ENCODE measurements at regions of chr1 and their contacts with region 1.

Region 1: GRCh38 chr1:233209481-233209880 is 86.0 kb downstream of the PCNX2 start:
- DNase-seq: no peak
- ATAC-seq: no peak
- H3K4me3 Mint-ChIP-seq: no peak overlapping the region
- H3K27ac Mint-ChIP-seq: no peak overlapping the region
- H3K4me1 Mint-ChIP-seq: no peaks in the 10 kb centered on the region
- H3K27me3 Mint-ChIP-seq: no peaks in the 10 kb centered on the region

Region 2: DNA sequence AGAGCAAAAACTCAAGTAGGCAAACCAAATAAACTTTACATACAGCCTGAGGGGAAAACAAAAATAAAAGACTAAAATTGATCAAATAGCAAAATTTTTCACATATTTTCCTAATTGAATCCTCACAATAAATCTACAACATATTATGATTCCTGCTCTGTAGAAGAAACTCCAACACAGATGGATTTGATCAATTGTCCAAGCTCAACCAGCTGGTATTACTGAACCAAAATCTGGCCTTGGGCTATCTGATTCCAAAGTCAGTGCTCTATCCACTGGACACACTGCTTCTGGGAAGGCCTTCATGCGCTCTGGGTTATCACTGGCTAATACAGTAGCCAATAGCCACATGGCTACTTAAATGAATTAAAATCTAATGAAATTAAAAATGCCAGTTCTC is 46.7 kb after region 1 on chr1:
- CTCF ChIA-PET with region 1: no interaction called
- POLR2A ChIA-PET with region 1: no interaction called
- intact Hi-C with region 1: loop called in 1 of 2 experiments (anchors 5 kb)
- DNase-seq: no peak
- ATAC-seq: no peak
- H3K4me3 Mint-ChIP-seq: no peak overlapping the region
- H3K27ac Mint-ChIP-seq: no peak overlapping the region
- H3K4me1 Mint-ChIP-seq: peaks cover 2% of the 10 kb centered on the region
- H3K27me3 Mint-ChIP-seq: no peaks in the 10 kb centered on the region

Region 3: DNA sequence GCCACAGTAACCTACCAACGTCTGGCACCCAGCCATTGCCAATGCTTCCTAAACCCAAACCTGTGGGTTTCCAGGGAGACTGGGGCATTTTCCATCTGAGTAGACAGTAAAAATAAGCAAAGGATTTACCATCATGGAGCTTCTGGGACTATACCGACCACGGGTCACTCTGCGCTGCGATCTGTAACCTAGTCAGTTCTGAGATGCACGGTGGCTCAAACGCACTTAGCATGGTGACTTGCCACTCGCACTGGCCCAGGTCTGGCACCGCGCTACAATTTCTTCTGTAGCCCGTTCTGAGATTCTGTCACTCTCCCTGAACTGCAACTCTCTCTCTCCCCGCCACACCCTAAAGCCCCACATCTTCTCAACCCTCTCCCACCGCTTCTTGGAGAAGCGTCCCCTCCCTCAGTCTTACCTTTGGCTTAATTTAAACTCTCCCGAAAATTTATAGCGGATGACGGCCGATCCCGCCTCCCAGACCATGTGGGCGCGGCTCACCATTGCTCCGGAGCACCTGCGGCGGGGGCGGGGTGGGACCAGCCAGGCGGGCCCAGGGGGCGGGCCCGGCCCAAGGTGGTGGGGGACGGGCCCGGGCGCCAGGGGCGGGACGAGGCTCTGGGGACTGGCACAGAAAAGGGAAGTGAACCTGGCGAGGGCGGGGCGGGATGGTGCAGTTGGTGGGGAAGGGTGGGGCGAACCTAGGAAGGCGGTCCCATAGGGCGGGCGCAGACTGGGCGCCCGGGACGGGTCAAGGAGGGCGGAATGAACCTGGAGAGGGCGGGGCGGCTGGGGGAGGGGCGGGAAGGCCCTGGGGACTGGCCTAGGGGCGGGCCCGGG is 117.5 kb after region 1 on chr1:
- CTCF ChIA-PET with region 1: no interaction called
- POLR2A ChIA-PET with region 1: no interaction called
- intact Hi-C with region 1: no loop called
- DNase-seq: peak; percentile 94
- ATAC-seq: peak; percentile 97
- H3K4me3 Mint-ChIP-seq: peak overlapping the region; percentile 69
- H3K27ac Mint-ChIP-seq: no peak overlapping the region
- H3K4me1 Mint-ChIP-seq: peaks cover 13% of the 10 kb centered on the region
- H3K27me3 Mint-ChIP-seq: peaks cover 13% of the 10 kb centered on the region